PC-3 (cell line): ENCODE measurements at regions of chr2 and their contacts with region 1.

Region 1: GRCh38 chr2:39837856-39838453 is 58.9 kb upstream of the THUMPD2 start:
- DNase-seq: peak; percentile 75
- ATAC-seq: peak; percentile 91
- H3K4me3 ChIP-seq: no peak overlapping the region
- H3K27ac ChIP-seq: no peak overlapping the region
- H3K4me1 ChIP-seq: peaks cover 5% of the 10 kb centered on the region
- H3K27me3 ChIP-seq: no peaks in the 10 kb centered on the region
- CTCF ChIP-seq: peak; percentile 96

Region 2: DNA sequence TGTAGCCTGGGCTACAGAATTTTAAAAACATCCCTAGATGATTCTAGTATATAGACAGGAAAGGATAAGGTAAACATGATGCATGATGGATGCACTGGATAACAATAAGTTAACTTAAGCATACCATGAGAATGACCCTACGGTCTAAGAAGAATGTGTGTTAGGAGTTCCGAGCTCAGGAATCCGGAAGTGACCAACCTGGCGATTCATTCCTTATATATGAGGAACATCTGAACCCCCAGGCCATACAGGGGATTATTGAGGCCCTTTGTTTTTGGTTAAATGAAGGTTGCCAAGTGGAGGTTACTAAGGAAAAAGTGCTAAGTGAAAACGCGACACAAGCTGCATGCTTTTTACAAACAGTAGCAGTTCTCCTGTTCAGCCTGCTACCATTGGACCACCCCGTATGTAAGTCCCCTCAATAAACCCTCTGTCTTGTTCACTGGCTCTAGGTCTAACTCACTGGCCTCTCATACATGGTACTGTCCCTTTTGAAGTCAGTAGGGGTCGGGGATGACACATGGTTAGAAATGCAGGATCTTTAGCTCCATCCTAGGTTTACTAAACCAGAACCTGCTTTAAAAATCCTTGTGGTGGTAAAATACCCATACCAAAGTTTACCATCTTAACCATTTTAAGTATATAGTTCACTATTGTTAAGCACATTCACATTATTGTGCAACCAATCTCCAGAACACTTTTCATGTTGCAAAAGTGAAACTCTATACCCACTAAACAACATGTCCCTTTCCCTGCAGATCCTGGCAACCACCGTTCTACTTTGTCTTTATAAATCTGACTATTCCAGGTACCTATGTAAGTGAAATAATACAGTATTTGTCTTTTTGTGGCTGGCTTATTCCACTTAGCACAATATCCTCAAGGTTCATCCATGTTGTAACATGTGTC is 289.9 kb before region 1 on chr2:
- CTCF ChIA-PET with region 1: no interaction called
- POLR2A ChIA-PET with region 1: no interaction called
- intact Hi-C with region 1: no loop called
- DNase-seq: peak; percentile 55
- ATAC-seq: no peak
- H3K4me3 ChIP-seq: no peak overlapping the region
- H3K27ac ChIP-seq: no peak overlapping the region
- H3K4me1 ChIP-seq: peaks cover 30% of the 10 kb centered on the region
- H3K27me3 ChIP-seq: no peaks in the 10 kb centered on the region
- CTCF ChIP-seq: no peak

Region 3: DNA sequence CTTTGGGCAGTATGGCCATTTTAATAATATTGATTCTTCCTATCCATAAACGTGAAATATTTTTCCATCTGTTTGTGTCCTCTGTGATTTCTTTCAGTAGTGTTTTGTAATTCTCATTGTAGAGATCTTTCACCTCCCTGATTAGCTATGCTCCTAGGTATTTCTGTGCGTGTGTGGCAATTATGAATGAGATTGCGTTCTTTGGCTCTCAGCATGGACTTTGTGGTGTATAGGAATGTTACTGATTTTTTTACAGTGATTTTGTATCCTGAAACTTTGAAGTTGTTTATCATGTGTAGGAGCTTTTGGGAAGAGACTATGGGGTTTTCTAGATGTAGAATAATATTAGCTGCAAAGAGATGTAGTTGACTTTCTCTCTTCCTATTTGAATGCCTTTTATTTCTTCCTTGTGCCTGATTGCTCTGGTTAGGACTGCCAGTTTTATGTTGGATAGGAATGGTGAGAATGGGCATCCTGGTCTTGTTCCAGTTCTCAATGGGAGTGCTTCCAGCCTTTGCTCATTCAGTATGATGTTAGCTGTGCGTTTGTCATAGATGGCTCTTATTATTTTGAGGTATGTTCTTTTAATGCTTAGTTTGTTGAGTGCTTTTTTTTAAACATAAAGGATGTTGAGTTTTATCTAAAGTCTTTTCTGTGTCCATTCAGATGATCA is 31.9 kb before region 1 on chr2:
- CTCF ChIA-PET with region 1: no interaction called
- POLR2A ChIA-PET with region 1: no interaction called
- intact Hi-C with region 1: no loop called
- DNase-seq: no peak
- ATAC-seq: no peak
- H3K4me3 ChIP-seq: no peak overlapping the region
- H3K27ac ChIP-seq: no peak overlapping the region
- H3K4me1 ChIP-seq: no peaks in the 10 kb centered on the region
- H3K27me3 ChIP-seq: no peaks in the 10 kb centered on the region
- CTCF ChIP-seq: no peak

Region 4: DNA sequence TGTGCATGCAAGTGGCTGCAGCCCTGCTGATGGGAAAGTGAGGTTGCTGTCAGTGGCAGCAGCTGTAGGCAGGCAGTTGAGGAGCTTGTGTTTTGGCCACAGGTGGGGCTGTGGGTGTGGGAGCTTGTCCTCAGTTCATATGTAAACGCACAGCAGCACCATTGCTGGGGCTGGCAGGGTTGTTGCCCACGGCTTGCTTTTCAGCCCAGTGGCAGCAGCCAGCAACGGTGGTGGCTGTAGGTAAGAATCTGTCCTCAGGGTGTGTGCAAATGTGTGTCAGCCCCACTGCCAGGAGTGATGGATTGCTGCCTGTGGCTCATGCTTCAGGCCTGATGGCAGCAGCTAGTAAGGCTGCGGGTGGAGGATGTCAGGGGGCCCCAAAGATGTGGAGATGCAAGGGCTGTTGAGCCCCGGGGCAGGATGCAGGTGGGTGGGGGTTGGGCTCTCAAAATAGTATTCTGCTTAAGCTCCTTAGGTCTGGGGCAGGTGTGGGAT is 82.4 kb after region 1 on chr2:
- CTCF ChIA-PET with region 1: no interaction called
- POLR2A ChIA-PET with region 1: no interaction called
- intact Hi-C with region 1: no loop called
- DNase-seq: no peak
- ATAC-seq: no peak
- H3K4me3 ChIP-seq: no peak overlapping the region
- H3K27ac ChIP-seq: no peak overlapping the region
- H3K4me1 ChIP-seq: peaks cover 7% of the 10 kb centered on the region
- H3K27me3 ChIP-seq: no peaks in the 10 kb centered on the region
- CTCF ChIP-seq: no peak

Region 5: GRCh38 chr2:39932198-39932597 is 94.2 kb after region 1 on chr2:
- CTCF ChIA-PET with region 1: no interaction called
- POLR2A ChIA-PET with region 1: no interaction called
- intact Hi-C with region 1: no loop called
- DNase-seq: peak; percentile 39
- ATAC-seq: peak; percentile 27; the same call in 1 of the 2 replicates
- H3K4me3 ChIP-seq: no peak overlapping the region
- H3K27ac ChIP-seq: no peak overlapping the region
- H3K4me1 ChIP-seq: peaks cover 10% of the 10 kb centered on the region; the same call in 1 of the 2 replicates
- H3K27me3 ChIP-seq: no peaks in the 10 kb centered on the region
- CTCF ChIP-seq: no peak

Region 6: DNA sequence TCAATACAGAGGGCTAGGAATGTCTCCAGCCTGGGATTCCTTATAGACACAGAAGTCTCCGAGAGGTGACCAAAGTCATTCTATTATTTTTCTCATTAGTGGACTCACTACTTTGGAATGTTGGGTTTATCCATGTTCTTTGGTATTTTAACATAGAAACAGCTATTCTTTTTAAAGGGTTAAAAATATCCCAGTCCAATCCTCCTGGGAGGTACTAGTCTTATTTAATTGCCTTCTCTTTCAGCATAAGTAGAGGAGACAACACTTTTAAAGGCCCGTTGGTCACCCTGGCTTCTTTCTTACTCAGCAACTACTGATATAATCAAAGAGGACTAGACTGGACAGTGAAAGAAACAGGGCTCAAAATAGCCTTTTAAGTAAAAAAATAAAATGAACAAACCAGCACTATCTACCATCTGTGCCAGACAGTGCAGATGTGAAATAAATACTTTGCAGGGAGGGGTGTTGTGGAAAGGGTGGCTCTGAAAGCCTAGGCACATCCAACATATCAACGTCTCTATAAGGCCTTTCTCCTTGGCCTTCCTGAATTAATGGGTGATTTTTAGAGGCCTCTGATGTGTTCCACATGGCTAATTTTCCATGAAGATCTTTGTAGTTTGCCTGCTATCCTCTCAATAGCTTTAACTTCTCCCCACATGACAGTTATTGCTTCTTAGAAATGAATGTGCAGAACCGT is 275.5 kb after region 1 on chr2:
- CTCF ChIA-PET with region 1: interaction called, 10 read pairs
- POLR2A ChIA-PET with region 1: no interaction called
- intact Hi-C with region 1: no loop called
- DNase-seq: no peak
- ATAC-seq: no peak
- H3K4me3 ChIP-seq: no peak overlapping the region
- H3K27ac ChIP-seq: no peak overlapping the region
- H3K4me1 ChIP-seq: no peaks in the 10 kb centered on the region
- H3K27me3 ChIP-seq: no peaks in the 10 kb centered on the region
- CTCF ChIP-seq: no peak